Activated T-helper 2 cell treated with anti-CD3 and anti-CD28 coated beads, Interferon-gamma antibody, Interleukin-2, Interleukin-4, amounts not matched to agents 10 μg/mL and 5 μg/mL and 100 μg/mL, durations not matched to agents 14 hours and 24 hours and 36 hours (primary cell): ENCODE measurements at regions of chr6 and their contacts with region 1.

Region 1: DNA sequence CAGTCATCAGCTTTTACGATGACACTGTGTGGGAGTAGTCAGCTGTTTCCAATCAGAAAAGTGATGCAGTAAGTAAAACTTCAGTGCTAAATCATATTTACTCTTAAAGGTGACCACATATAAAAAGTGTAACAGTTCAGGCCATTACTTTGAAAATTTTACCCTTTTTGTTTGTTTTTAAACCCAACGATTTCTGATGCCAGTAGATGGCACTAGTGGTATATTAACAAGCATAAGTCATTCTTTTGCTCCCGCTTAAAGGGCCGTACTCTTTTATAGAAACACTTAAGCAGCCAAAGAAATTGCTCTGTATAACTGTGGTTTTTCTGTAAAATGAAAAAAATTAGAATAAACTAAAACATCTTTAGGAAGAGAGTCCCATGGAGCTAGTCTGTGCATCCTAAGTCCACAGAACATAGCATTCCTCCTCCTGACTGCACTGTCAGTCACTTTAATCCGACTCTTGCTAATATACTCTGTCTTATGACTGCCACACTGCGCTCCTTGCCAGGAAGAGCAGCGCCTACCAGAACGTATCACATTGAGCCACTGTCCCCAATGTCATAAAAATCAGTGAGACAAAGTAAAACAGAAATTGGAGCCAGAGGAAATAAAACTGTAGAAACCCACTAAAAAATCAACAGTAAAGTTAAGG is 25.0 kb downstream of the HEBP2 start:
- DNase-seq: no peak
- H3K4me3 Mint-ChIP-seq: no peak overlapping the region
- H3K27ac Mint-ChIP-seq: no peak overlapping the region
- H3K4me1 Mint-ChIP-seq: no peaks in the 10 kb centered on the region
- H3K27me3 Mint-ChIP-seq: peaks cover 3% of the 10 kb centered on the region

Region 2: DNA sequence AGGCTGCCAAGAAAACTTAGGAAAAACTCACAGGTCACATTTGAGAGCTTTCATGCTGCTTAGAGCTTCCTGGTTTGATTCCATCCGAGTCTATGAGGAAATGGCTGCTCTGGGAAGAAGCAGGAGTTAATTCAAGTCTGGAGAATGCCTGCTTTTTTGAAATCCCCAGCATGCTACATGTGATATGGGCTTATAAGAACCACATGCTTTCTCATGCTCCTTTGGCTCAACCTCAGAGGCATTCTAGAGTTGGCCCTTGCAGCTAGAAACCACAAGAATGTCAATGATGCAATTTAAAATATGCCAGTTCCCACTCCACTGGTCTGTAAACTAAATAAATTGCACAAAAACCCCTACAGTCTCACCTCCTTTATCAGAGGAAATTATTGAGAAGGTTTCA is 792.0 kb before region 1 on chr6:
- intact Hi-C with region 1: no loop called
- DNase-seq: no peak
- H3K4me3 Mint-ChIP-seq: no peak overlapping the region
- H3K27ac Mint-ChIP-seq: no peak overlapping the region
- H3K4me1 Mint-ChIP-seq: peaks cover 19% of the 10 kb centered on the region
- H3K27me3 Mint-ChIP-seq: peaks cover 4% of the 10 kb centered on the region

Region 3: DNA sequence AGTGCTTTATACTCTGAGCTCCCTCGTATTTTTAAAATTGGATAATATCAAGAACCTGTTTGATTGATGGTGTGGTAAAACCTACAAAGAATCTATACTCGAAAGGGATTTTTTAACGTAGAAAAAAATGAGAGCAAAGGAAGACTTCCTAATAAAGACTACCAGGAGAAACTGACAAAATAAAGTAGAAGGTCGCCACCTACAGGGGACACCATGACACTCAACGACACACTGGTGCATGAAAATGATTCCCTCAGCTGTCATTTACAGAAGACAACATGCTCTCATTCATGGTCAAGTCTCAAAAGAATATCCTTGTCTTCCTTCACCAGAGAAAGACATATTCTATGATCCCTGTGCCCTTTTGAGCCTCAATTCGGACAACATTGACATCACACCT is 80.3 kb after region 1 on chr6:
- intact Hi-C with region 1: loop called (anchors 1 kb)
- DNase-seq: peak; percentile 21
- H3K4me3 Mint-ChIP-seq: no peak overlapping the region
- H3K27ac Mint-ChIP-seq: no peak overlapping the region
- H3K4me1 Mint-ChIP-seq: peaks cover 4% of the 10 kb centered on the region
- H3K27me3 Mint-ChIP-seq: peaks cover 43% of the 10 kb centered on the region

Region 4: GRCh38 chr6:138517635-138518034 is 88.6 kb after region 1 on chr6:
- intact Hi-C with region 1: loop called (anchors 1 kb)
- DNase-seq: peak; percentile 42
- H3K4me3 Mint-ChIP-seq: no peak overlapping the region
- H3K27ac Mint-ChIP-seq: no peak overlapping the region
- H3K4me1 Mint-ChIP-seq: peaks cover 22% of the 10 kb centered on the region
- H3K27me3 Mint-ChIP-seq: peaks cover 13% of the 10 kb centered on the region